PC-9 (cell line): ENCODE measurements at regions of chr12 and their contacts with region 1.

Region 1: GRCh38 chr12:113862590-113863454 is 103.3 kb downstream of the RBM19 start:
- DNase-seq: no peak
- H3K4me3 ChIP-seq: no peak overlapping the region
- H3K27ac ChIP-seq: no peak overlapping the region
- H3K4me1 ChIP-seq: peaks cover 11% of the 10 kb centered on the region; the same call in 1 of the 2 replicates
- H3K27me3 ChIP-seq: no peaks in the 10 kb centered on the region
- CTCF ChIP-seq: no peak

Region 2: GRCh38 chr12:113727651-113728061 is 135.2 kb before region 1 on chr12:
- CTCF ChIA-PET with region 1: no interaction called
- POLR2A ChIA-PET with region 1: no interaction called
- intact Hi-C with region 1: loop called (anchors 5 kb)
- DNase-seq: peak; percentile 67 to 88
- H3K4me3 ChIP-seq: no peak overlapping the region
- H3K27ac ChIP-seq: no peak overlapping the region
- H3K4me1 ChIP-seq: peaks cover 18% of the 10 kb centered on the region
- H3K27me3 ChIP-seq: no peaks in the 10 kb centered on the region
- CTCF ChIP-seq: no peak; the same call in 1 of the 2 replicates

Region 3: DNA sequence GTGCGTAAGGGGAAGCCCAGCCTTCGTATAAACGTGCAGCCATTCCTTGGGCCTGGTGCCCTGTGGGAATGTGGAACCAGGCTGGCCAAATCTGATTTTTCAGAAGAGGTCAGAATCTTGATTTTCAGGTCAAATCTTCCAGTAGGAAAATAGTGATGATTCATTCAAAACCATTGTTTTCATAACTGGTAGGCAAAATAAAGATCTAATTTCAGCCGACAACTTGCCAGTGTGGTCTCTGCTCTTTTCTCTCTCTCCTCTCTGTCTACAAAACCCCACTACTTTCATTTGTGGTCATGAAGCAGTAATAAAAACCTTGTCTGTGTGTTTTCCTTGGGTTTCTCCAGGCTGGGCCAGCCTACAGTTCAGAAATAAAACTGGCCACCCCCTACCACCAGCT is 31.8 kb before region 1 on chr12:
- CTCF ChIA-PET with region 1: no interaction called
- POLR2A ChIA-PET with region 1: no interaction called
- intact Hi-C with region 1: no loop called
- DNase-seq: peak in 1 of 2 experiments; percentile 15
- H3K4me3 ChIP-seq: no peak overlapping the region
- H3K27ac ChIP-seq: no peak overlapping the region
- H3K4me1 ChIP-seq: peaks cover 4% of the 10 kb centered on the region; the same call in 1 of the 2 replicates
- H3K27me3 ChIP-seq: no peaks in the 10 kb centered on the region
- CTCF ChIP-seq: no peak

Region 4: DNA sequence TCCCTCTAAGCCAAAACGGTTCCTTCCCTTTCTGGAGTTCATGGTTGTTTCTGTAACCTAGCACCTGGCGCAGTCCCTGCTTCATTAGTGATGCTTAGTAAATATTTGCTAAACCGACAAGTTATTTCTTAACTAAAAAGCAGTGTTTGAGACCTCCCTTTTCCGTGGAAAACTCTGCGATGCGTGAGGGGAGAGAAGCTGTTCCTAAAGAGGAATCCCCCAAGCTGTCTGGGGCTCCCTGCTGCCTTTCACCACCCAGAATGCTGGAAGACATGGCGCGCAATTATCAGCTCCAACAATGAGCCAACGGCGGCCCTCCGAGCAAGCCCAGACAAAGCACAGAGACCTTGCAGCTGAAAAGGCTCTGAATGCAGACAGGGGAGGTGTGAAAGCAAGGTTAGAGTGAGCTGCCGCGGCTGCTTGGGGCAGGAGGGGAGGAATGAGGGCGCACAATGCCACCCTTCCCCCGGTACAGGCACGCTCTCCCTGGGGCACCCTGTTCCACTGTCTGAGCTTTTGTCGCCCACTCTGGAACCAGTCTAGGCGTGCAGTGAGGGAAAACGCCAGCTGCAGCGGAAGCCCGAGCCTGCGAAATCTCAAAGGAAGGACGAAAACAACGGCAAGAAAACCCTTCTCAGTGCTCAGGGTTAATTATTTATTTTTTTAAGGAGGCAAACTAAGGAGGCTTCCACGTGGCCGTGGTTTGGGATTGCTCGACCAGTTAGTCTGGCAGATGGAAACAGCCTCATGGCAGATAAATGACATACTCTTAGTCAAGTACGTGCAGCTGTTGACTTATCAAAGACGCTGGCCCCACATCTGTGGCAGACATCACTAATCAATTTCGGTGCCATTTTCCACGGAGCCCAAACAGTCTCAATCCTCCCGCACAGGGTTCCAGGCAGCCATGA is 37.0 kb after region 1 on chr12:
- CTCF ChIA-PET with region 1: no interaction called
- POLR2A ChIA-PET with region 1: no interaction called
- intact Hi-C with region 1: no loop called
- DNase-seq: peak in 1 of 2 experiments; percentile 12
- H3K4me3 ChIP-seq: no peak overlapping the region
- H3K27ac ChIP-seq: no peak overlapping the region
- H3K4me1 ChIP-seq: no peaks in the 10 kb centered on the region
- H3K27me3 ChIP-seq: no peaks in the 10 kb centered on the region
- CTCF ChIP-seq: no peak

Region 5: DNA sequence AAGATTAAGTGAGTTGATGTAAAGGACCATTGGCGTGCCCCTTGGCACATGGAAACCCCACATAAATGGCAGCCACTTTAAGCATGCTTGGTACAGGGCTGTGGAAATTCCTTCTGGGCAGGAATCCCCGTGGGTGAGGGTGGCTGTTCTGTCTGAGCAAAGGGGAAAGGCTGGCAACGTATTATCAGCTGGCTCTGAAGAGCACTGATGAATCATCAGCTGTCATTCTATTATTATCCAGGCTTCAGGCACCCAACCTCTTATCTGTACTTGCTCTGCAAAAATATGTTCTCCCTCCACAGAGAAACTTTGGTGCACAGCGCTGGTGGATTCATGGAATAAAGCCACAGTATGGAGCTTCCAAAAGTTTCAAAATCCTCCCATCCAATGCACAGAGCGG is 376.0 kb after region 1 on chr12:
- CTCF ChIA-PET with region 1: no interaction called
- POLR2A ChIA-PET with region 1: no interaction called
- intact Hi-C with region 1: no loop called
- DNase-seq: no peak
- H3K4me3 ChIP-seq: no peak overlapping the region
- H3K27ac ChIP-seq: no peak overlapping the region
- H3K4me1 ChIP-seq: no peaks in the 10 kb centered on the region
- H3K27me3 ChIP-seq: peaks cover 17% of the 10 kb centered on the region
- CTCF ChIP-seq: no peak